Activated CD4-positive, alpha-beta T cell treated with anti-CD3 and anti-CD28 coated beads for 36 hours (primary cell): ENCODE measurements at regions of chr4 and their contacts with region 1.

Region 1: GRCh38 chr4:40699648-40700047 is 50.1 kb upstream of the NSUN7 start:
- DNase-seq: peak; percentile 27
- ATAC-seq: peak; percentile 52
- H3K4me3 Mint-ChIP-seq: no peak overlapping the region
- H3K27ac Mint-ChIP-seq: peak overlapping the region; percentile 51
- H3K4me1 Mint-ChIP-seq: peaks cover 39% of the 10 kb centered on the region
- H3K27me3 Mint-ChIP-seq: no peaks in the 10 kb centered on the region

Region 2: GRCh38 chr4:40550948-40551462 is 148.6 kb before region 1 on chr4:
- CTCF ChIA-PET with region 1: no interaction called
- POLR2A ChIA-PET with region 1: interaction called, 4 read pairs
- intact Hi-C with region 1: loop called in 1 of 2 experiments (anchors 1 kb)
- DNase-seq: peak; percentile 20
- ATAC-seq: peak; percentile 48
- H3K4me3 Mint-ChIP-seq: peak overlapping the region; percentile 55
- H3K27ac Mint-ChIP-seq: peak overlapping the region; percentile 52
- H3K4me1 Mint-ChIP-seq: peaks cover 27% of the 10 kb centered on the region
- H3K27me3 Mint-ChIP-seq: no peaks in the 10 kb centered on the region

Region 3: DNA sequence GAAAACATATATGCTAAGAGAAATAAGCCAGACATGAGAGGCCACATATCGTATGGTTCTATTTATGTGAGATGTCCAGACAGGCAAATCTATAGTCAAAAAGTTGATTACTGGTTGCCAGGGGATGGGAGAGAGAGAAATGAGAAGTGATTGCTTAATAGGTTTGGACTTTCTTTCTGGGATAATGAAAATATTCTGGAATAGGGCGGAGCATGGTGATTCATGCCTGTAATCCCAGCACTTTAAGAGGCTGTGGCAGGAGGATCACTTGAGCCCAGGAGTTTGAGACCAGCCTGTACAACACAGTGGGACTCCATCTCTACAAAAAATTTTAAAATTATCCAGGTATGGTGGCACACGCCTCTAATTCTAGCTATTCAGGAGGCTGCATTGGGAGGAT is 92.4 kb before region 1 on chr4:
- CTCF ChIA-PET with region 1: no interaction called
- POLR2A ChIA-PET with region 1: no interaction called
- intact Hi-C with region 1: no loop called
- DNase-seq: no peak
- ATAC-seq: no peak
- H3K4me3 Mint-ChIP-seq: no peak overlapping the region
- H3K27ac Mint-ChIP-seq: no peak overlapping the region
- H3K4me1 Mint-ChIP-seq: no peaks in the 10 kb centered on the region
- H3K27me3 Mint-ChIP-seq: no peaks in the 10 kb centered on the region

Region 4: GRCh38 chr4:40662962-40663604 is 36.6 kb before region 1 on chr4:
- CTCF ChIA-PET with region 1: interaction called, 4 read pairs
- POLR2A ChIA-PET with region 1: interaction called, 6 read pairs
- intact Hi-C with region 1: loop called (anchors 1 kb)
- DNase-seq: peak; percentile 74
- ATAC-seq: peak; percentile 88
- H3K4me3 Mint-ChIP-seq: no peak overlapping the region
- H3K27ac Mint-ChIP-seq: peak overlapping the region; percentile 80
- H3K4me1 Mint-ChIP-seq: peaks cover 27% of the 10 kb centered on the region
- H3K27me3 Mint-ChIP-seq: no peaks in the 10 kb centered on the region

Region 5: GRCh38 chr4:40687676-40688389 is 11.8 kb before region 1 on chr4:
- CTCF ChIA-PET with region 1: interaction called, 7 read pairs
- POLR2A ChIA-PET with region 1: no interaction called
- intact Hi-C with region 1: loop called (anchors 1 kb)
- DNase-seq: no peak
- ATAC-seq: peak; percentile 18
- H3K4me3 Mint-ChIP-seq: no peak overlapping the region
- H3K27ac Mint-ChIP-seq: peak overlapping the region; percentile 91
- H3K4me1 Mint-ChIP-seq: peaks cover 15% of the 10 kb centered on the region
- H3K27me3 Mint-ChIP-seq: peaks cover 1% of the 10 kb centered on the region

Region 6: DNA sequence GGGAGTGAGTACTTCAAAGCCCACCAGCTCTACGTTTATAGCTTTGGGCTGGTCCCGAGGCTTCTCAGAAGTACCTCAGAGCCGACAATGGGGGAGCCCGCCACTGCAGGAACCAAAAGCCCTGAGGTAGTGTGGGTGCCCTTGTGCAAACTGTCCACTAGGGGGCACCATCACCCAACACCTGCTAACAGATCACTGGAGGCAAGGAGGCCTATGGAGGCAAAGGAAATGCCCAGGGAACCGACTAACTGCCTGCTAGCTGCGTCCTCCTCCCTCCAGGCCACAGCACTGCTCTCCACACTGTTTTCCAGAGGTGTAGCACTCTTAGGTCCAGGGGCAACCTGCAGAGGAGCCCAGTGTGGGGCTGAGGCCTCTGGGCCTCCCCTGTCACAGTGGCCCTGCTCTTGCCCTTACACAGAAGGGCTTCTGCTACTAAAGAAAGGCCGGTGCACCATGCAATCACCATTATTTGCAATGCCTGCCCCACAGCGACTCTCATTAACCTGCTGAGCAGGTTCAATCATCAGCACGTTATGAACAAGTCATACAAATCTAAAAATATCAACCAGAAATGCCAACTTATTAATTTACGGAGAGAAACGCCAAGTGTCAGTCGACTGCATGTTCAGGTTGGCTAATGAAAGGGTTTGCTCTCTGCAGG is 209.2 kb after region 1 on chr4:
- CTCF ChIA-PET with region 1: no interaction called
- POLR2A ChIA-PET with region 1: no interaction called
- intact Hi-C with region 1: loop called in 1 of 2 experiments (anchors 1 kb)
- DNase-seq: peak; percentile 90
- ATAC-seq: peak; percentile 85
- H3K4me3 Mint-ChIP-seq: peak overlapping the region; percentile 26
- H3K27ac Mint-ChIP-seq: peak overlapping the region; percentile 95
- H3K4me1 Mint-ChIP-seq: peaks cover 36% of the 10 kb centered on the region
- H3K27me3 Mint-ChIP-seq: no peaks in the 10 kb centered on the region